ENCODE measurements at regions of chr3 and their contacts with region 1.

Region 1: GRCh38 chr3:6736836-6737629 is 123.9 kb upstream of the GRM7 start:
- DNase-seq: no peak
- ATAC-seq: peak; percentile 68
- H3K4me3 ChIP-seq: no peak overlapping the region
- H3K27ac ChIP-seq: no peak overlapping the region
- H3K4me1 ChIP-seq: no peaks in the 10 kb centered on the region
- H3K27me3 ChIP-seq: no peaks in the 10 kb centered on the region
- CTCF ChIP-seq: no peak
- EP300 ChIP-seq: no peak
- POLR2A ChIP-seq: no peak
- RAD21 ChIP-seq: no peak

Region 2: DNA sequence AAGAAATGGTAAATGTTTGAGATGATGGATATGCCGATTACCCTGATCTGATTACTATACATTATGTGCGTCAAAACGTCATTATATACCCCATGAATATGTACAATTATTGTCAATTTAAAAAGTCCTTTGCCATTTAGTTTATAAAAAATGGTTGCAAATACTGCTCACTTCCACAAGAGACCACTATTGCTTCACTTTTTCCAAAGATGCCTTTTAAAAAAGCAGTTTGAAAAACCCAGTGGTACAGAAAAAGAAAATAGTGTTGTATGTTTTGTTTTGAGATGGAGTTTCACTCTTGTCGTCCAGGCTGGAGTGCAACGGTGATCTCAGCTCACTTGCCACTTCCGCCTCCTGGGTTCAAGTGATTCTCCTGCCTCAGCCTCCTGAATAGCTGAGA is 1510.2 kb before region 1 on chr3:
- CTCF ChIA-PET with region 1: no interaction called
- POLR2A ChIA-PET with region 1: no interaction called
- RAD21 ChIA-PET with region 1: no interaction called
- SMC1A ChIA-PET with region 1: no interaction called
- in situ Hi-C with region 1: no loop called
- intact Hi-C with region 1: no loop called
- DNase-seq: no peak
- ATAC-seq: peak; percentile 26
- H3K4me3 ChIP-seq: no peak overlapping the region
- H3K27ac ChIP-seq: no peak overlapping the region
- H3K4me1 ChIP-seq: no peaks in the 10 kb centered on the region
- H3K27me3 ChIP-seq: no peaks in the 10 kb centered on the region
- CTCF ChIP-seq: peak; percentile 37 to 60 (median 45); a peak in 5 of 6 replicates
- EP300 ChIP-seq: no peak
- POLR2A ChIP-seq: no peak
- RAD21 ChIP-seq: peak; percentile 88

Region 3: DNA sequence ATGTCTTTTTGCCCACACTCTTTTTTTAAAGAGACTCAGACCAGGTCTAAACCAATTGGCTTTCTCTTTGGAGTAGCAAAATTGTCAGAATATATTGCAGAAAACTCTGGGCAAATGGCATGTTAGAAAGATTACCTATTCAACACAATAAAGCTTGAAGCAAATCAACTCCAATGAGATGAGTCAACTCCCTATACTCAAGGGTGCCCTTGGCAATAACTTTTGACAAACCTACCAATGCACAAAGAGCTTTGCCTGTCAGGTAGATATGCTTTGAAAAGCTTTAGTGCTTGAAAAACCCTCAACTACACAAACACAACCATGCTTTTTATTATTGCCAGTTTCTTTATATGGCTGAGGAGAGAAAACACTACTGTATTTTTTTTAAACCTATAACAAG is 13.8 kb before region 1 on chr3:
- CTCF ChIA-PET with region 1: interaction called, 5 read pairs
- POLR2A ChIA-PET with region 1: interaction called, 3 read pairs
- RAD21 ChIA-PET with region 1: no interaction called
- SMC1A ChIA-PET with region 1: interaction called, 10 read pairs
- in situ Hi-C with region 1: no loop called
- intact Hi-C with region 1: no loop called
- DNase-seq: no peak
- ATAC-seq: no peak
- H3K4me3 ChIP-seq: no peak overlapping the region
- H3K27ac ChIP-seq: no peak overlapping the region
- H3K4me1 ChIP-seq: peaks cover 3% of the 10 kb centered on the region; the same call in 1 of the 2 replicates
- H3K27me3 ChIP-seq: no peaks in the 10 kb centered on the region
- CTCF ChIP-seq: no peak
- EP300 ChIP-seq: no peak
- POLR2A ChIP-seq: no peak
- RAD21 ChIP-seq: no peak

Measured in GM12878 (cell line).